Calu3 (cell line): ENCODE measurements at regions of chr10 and their contacts with region 1.

Region 1: DNA sequence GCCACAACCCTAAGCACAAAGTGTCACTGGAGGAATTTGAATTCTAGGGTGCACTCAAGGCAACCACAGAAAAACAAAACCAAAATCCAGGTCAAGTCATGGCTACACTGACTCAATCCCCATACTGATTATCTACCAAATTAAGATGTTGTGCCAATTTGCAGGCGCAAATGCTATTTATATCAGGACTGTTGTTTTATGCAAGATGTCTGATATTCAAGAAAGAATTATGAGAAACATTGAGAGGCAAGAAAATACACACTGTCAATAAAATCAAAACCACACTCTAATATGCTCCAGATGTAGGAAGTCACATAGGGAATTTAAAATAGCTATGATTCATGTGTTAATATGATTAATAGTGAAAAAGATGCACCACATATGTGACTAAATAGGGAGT is 141.3 kb upstream of the MINDY3 start:
- DNase-seq: no peak
- H3K4me3 Mint-ChIP-seq: no peak overlapping the region
- H3K27ac Mint-ChIP-seq: no peak overlapping the region
- H3K4me1 Mint-ChIP-seq: no peaks in the 10 kb centered on the region
- H3K27me3 Mint-ChIP-seq: no peaks in the 10 kb centered on the region
- CTCF ChIP-seq: no peak

Region 2: GRCh38 chr10:15960277-15960676 is 41.3 kb before region 1 on chr10:
- CTCF ChIA-PET with region 1: interaction called, 11 read pairs
- intact Hi-C with region 1: no loop called
- DNase-seq: no peak
- H3K4me3 Mint-ChIP-seq: no peak overlapping the region
- H3K27ac Mint-ChIP-seq: no peak overlapping the region
- H3K4me1 Mint-ChIP-seq: no peaks in the 10 kb centered on the region
- H3K27me3 Mint-ChIP-seq: no peaks in the 10 kb centered on the region
- CTCF ChIP-seq: no peak

Region 3: DNA sequence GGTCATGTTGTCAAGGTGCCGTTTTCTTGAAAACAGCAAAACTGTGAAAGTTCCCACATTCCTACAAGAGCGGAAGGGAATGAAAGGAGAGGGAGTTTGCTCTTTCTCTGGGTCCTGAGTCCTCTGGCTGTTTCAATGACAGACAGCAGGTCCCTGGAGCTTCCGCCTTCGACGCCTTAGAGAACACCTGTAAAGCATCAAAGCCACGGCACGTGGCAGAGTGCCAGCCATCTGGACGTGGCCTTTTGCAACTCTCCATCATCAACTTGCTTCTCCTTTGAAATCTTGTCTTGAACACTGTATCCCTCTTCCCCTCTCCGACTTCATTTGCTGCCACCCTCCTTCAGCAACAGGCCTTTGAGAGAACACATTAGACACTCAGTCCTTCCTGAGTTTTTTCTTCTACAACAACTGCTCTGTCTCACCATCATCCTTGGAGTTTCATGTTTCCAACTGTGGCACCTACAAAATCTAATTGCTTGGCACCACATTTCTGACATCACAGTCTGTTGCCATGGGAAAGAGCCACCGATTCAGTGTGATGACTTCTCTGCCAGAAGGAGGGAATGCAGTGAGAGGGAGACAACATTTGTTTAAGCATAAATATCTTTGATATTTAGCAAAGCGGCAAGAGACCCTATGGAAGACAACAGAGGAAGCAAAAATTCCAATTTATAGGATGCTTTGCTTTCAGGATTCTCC is 230.3 kb after region 1 on chr10:
- CTCF ChIA-PET with region 1: no interaction called
- intact Hi-C with region 1: no loop called
- DNase-seq: no peak
- H3K4me3 Mint-ChIP-seq: no peak overlapping the region
- H3K27ac Mint-ChIP-seq: no peak overlapping the region
- H3K4me1 Mint-ChIP-seq: no peaks in the 10 kb centered on the region
- H3K27me3 Mint-ChIP-seq: no peaks in the 10 kb centered on the region
- CTCF ChIP-seq: no peak